Common myeloid progenitor, CD34-positive (primary cell): ENCODE measurements at regions of chr10 and their contacts with region 1.

Region 1: GRCh38 chr10:103736763-103737162 is 118.6 kb downstream of the SH3PXD2A start:
- DNase-seq: peak in 1 of 3 donors; percentile 9
- H3K4me3 ChIP-seq: no peak overlapping the region
- H3K27ac ChIP-seq: no peak overlapping the region
- H3K4me1 ChIP-seq: peaks cover 0 to 6% (median 5%) of the 10 kb centered on the region in 4 experiments
- H3K27me3 ChIP-seq: no peaks in the 10 kb centered on the region

Region 2: DNA sequence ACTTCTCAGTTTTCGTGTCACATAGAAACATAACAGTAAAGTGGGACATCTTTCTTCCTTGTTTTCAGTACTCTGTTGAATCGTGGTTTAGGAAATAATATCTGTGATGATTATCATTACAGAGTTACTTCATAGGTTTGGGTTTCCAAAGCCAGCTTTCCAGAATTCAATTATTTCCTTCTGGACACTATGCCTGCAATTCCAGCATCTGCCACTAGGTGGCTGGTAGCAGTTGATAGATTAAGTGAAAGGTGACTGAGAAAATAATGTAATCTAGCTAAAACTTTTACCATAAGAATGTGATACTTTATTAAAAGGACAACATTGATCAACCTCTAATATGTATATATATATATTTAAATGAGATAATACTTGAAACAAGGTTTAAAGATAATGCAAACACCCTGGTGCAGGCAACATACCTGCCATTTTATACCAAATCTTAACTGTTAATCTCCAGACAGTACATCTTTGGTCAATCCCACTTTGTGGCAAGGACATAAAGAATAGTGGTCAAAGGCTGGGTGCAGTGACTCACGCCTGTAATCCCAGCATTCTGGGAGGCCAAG is 16.0 kb after region 1 on chr10:
- CTCF ChIA-PET with region 1: interaction called, 11 read pairs
- POLR2A ChIA-PET with region 1: no interaction called
- DNase-seq: peak in 1 of 3 donors; percentile 33
- H3K4me3 ChIP-seq: no peak overlapping the region
- H3K27ac ChIP-seq: no peak overlapping the region
- H3K4me1 ChIP-seq: peaks cover 0 to 25% (median 10%) of the 10 kb centered on the region in 4 experiments
- H3K27me3 ChIP-seq: no peaks in the 10 kb centered on the region

Region 3: GRCh38 chr10:103947799-103948516 is 211.2 kb after region 1 on chr10:
- CTCF ChIA-PET with region 1: no interaction called
- POLR2A ChIA-PET with region 1: no interaction called
- DNase-seq: peak; percentile 19 to 60 (median 47)
- H3K4me3 ChIP-seq: peak overlapping the region in 1 of 7 experiments; percentile 18
- H3K27ac ChIP-seq: no peak overlapping the region
- H3K4me1 ChIP-seq: peaks cover 0 to 9% (median 4%) of the 10 kb centered on the region in 4 experiments
- H3K27me3 ChIP-seq: peaks cover 0 to 2% (median 0%) of the 10 kb centered on the region in 5 experiments